ENCODE measurements at regions of chr1 and their contacts with region 1.

Region 1: DNA sequence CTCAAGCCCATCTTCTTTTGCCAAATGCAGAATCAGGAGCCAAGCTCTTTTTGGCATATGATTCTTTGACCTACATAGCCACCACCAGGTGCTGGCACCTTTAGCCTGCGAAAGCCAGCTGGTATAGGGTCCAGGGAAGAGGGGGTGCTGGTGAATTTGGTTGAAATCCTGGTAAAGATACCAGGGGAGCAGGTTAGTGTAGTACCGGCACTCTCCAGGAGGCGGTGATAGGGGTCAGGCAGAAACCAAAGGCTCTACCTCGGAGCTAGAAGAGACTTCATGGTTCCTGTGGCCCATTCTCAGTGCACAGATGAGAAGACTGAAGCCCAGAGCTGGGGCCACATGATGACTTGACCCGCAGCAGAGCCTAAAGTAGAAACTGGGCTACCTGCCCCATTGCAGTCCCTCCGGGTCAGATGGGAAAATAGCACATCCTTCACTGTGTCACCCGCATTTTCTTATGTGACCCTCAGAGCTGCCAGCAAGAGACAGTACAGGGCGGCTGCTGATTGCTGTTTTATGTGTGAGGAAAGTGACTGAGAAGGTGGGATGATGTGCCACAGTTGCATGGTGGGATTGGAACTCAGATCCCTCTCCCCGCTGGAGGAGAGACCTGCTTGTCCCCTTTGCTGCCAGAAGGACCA is 36.0 kb upstream of the IL19 start:
- DNase-seq: peak; percentile 74
- ATAC-seq: peak; percentile 28
- H3K4me3 Mint-ChIP-seq: no peak overlapping the region
- H3K27ac Mint-ChIP-seq: peak overlapping the region; percentile 44
- H3K4me1 Mint-ChIP-seq: peaks cover 70% of the 10 kb centered on the region
- H3K27me3 Mint-ChIP-seq: no peaks in the 10 kb centered on the region

Region 2: DNA sequence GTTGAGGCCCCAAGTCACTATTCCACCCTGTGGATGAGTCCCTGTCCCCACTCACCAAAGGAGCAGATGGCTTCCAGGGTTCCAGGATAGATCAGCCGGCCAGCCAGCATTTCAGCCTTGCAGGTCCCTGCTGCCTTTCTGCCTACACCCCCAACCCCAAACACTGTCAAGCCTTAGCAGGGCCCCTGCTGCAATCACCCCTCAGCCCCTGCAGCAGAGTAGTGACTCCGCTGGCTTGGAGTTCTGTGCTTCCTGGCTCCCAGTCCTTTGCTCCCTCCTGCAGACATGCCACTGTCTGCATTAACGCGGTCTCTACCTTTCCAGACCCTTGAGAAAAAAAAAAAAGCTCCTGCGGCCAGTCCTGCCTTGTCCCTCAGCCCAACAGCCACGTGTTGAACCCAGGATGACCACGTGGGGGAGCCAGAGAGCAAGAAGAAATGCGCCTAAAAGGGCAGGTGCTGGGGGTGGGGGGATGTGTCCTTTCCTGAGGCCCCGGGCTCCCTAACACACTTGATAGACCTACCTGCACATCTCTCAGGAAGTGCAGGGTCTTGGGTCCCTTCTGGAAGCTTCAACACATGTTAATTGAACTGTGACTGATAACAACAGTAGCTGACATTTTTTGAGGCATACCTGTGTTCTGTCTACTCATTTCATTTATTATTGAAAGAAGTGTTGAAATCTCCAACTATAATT is 189.9 kb before region 1 on chr1:
- CTCF ChIA-PET with region 1: no interaction called
- POLR2A ChIA-PET with region 1: no interaction called
- DNase-seq: peak; percentile 85
- ATAC-seq: peak; percentile 81
- H3K4me3 Mint-ChIP-seq: no peak overlapping the region
- H3K27ac Mint-ChIP-seq: peak overlapping the region; percentile 26
- H3K4me1 Mint-ChIP-seq: peaks cover 20% of the 10 kb centered on the region
- H3K27me3 Mint-ChIP-seq: no peaks in the 10 kb centered on the region

Region 3: DNA sequence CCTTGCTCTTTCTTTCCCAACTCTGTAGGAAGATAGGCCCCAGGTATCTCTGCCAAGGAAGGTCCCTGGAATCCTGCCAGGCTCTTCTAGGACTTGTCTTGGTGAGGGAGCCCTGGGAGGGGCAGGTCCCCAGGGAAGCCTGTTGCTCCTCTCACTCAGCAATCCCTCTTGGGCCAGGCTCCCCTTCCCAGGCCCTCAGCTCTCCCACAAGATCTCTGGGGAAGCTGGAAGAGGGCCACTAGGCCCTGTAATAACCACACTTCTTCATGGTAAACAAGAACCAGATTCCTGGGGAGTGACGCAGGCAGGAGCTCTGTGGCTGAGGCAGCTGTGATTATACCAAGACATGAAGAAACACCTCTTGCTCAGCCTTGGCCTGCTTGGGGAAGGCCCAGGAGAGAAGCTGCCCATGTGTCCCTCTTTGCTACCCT is 59.9 kb before region 1 on chr1:
- CTCF ChIA-PET with region 1: no interaction called
- POLR2A ChIA-PET with region 1: no interaction called
- DNase-seq: no peak
- ATAC-seq: no peak
- H3K4me3 Mint-ChIP-seq: no peak overlapping the region
- H3K27ac Mint-ChIP-seq: no peak overlapping the region
- H3K4me1 Mint-ChIP-seq: peaks cover 3% of the 10 kb centered on the region
- H3K27me3 Mint-ChIP-seq: peaks cover 4% of the 10 kb centered on the region

Region 4: DNA sequence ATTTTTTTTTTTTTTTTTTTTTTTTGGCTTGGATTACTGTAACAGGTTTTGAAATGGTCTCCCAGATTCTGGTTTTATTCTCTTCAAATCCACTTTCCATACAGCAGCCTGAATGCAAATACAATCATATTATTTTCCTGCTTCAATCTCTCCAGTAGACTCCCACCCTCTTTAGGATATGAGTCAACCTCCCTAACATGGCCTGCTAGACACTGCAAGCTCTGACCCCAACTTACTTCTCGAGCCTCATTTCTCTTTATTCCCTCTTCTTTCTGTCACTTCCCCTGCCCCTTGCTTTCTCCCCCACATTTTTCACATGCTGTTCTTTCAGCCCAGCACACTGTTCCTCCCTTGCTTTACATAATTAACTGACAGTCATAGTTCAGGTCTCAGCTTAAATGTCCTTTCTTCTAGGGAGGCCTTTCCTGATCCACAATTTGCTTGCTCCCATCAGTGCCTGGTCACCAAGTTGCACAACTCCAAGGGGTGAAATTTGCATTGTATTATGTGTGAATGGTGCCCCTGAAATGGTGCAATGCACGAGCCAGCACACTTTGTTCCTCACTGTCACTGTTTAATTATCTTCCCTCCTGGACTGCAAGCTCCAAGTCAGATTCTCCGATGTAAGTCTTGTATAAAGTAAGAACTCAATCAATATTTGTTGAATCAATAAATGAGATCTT is 13.9 kb after region 1 on chr1:
- CTCF ChIA-PET with region 1: interaction called, 13 read pairs
- POLR2A ChIA-PET with region 1: interaction called, 3 read pairs
- DNase-seq: no peak
- ATAC-seq: no peak
- H3K4me3 Mint-ChIP-seq: no peak overlapping the region
- H3K27ac Mint-ChIP-seq: no peak overlapping the region
- H3K4me1 Mint-ChIP-seq: peaks cover 20% of the 10 kb centered on the region
- H3K27me3 Mint-ChIP-seq: peaks cover 24% of the 10 kb centered on the region

Region 5: DNA sequence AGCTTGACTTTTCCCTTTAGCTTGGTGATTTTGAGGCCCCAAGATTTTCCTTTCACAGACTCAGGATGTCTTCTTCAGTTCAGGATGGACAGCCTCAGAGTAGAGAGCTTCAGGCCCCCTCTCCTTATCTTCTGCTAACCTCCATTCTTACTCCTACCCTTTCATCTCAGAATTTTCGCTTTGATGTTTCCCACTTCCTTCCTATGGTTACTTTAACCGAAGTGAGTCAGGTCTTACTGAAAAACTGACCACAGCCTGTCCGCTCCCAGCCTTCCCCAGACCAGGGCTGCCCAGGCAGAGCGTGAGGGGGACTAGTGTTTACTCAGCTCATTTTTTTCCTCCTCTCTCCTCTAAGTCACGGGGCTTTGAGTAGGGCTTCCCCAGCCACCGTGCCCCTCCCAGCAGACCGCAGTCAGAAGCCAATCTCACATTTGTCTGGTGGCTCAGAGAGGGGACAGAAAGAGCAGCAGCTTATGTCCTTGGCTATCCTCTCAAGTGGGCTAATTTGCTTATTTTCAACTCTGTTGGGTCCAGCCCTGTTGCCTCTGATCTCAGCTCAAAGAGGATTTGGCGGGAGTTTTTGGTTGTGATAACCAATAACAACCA is 31.7 kb after region 1 on chr1:
- CTCF ChIA-PET with region 1: interaction called, 118 read pairs
- POLR2A ChIA-PET with region 1: interaction called, 4 read pairs
- DNase-seq: peak; percentile 85
- ATAC-seq: peak; percentile 80
- H3K4me3 Mint-ChIP-seq: peak overlapping the region; percentile 61
- H3K27ac Mint-ChIP-seq: peak overlapping the region; percentile 68
- H3K4me1 Mint-ChIP-seq: peaks cover 70% of the 10 kb centered on the region
- H3K27me3 Mint-ChIP-seq: peaks cover 19% of the 10 kb centered on the region

Region 6: DNA sequence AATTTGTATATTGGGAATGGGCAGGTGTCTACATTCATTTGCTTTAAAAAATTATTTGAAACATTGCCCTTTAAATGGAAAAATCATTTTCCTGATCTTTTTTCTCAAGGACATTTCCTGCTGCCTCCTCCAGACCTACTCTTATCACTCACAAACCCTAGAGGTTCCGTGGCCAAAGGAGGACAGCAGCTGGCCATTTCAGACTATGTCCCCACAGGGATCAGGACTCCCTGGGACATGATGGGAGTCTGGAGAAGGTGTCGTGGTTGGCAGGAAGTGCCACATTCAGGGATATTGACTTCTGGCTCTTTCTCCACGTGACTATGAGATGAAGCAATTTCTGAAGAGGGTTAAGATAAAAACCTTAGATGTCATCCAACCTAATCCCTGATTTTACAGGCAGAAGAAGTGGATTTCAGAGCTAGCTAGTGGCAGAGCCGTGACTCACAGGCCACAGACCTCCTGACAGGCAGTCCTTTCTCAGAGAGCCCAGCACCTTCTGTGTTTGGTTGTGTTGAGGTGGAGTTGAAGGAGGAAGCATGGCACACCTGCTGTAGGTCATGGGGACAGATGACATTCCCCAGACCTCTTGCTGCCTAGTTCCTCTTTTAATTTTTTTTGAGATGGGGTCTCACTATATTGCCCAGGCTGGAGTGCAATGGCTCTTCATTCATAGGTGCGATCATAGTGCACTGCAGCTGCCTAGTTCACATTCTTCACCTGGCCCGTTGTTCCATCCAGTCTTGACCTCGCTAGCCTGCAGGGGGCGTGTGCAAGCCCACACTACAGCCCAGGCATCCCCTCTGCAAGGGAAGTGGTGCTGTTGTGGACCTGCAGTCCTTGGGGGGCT is 63.1 kb after region 1 on chr1:
- CTCF ChIA-PET with region 1: interaction called, 724 read pairs
- POLR2A ChIA-PET with region 1: interaction called, 11 read pairs
- DNase-seq: peak; percentile 45
- ATAC-seq: no peak
- H3K4me3 Mint-ChIP-seq: no peak overlapping the region
- H3K27ac Mint-ChIP-seq: no peak overlapping the region
- H3K4me1 Mint-ChIP-seq: peaks cover 51% of the 10 kb centered on the region
- H3K27me3 Mint-ChIP-seq: peaks cover 34% of the 10 kb centered on the region

Region 7: DNA sequence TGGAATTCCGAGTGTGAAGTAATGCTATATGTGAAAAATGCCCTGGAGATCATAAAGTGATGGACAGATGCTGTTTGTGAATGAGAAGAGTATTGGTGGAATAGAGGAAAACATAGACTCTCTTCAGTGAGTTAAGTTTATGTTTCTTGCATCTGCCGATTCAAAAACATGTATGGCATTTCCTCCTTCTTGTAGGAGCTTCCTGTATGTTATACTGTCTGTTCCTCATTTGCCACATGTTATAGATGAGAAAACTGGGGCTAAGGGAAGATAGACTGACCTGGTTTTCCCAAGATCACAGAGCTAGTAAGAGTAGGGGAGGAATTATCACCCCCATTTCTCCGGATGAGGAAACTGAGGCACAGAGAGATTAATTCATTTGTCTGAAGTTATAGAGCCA is 89.7 kb after region 1 on chr1:
- CTCF ChIA-PET with region 1: interaction called, 10 read pairs
- POLR2A ChIA-PET with region 1: no interaction called
- DNase-seq: no peak
- ATAC-seq: no peak
- H3K4me3 Mint-ChIP-seq: no peak overlapping the region
- H3K27ac Mint-ChIP-seq: no peak overlapping the region
- H3K4me1 Mint-ChIP-seq: peaks cover 40% of the 10 kb centered on the region
- H3K27me3 Mint-ChIP-seq: no peaks in the 10 kb centered on the region

Region 8: GRCh38 chr1:206856674-206857464 is 122.2 kb after region 1 on chr1:
- CTCF ChIA-PET with region 1: interaction called, 10 read pairs
- POLR2A ChIA-PET with region 1: no interaction called
- DNase-seq: no peak
- ATAC-seq: peak; percentile 53
- H3K4me3 Mint-ChIP-seq: no peak overlapping the region
- H3K27ac Mint-ChIP-seq: no peak overlapping the region
- H3K4me1 Mint-ChIP-seq: peaks cover 15% of the 10 kb centered on the region
- H3K27me3 Mint-ChIP-seq: peaks cover 25% of the 10 kb centered on the region

Region 9: DNA sequence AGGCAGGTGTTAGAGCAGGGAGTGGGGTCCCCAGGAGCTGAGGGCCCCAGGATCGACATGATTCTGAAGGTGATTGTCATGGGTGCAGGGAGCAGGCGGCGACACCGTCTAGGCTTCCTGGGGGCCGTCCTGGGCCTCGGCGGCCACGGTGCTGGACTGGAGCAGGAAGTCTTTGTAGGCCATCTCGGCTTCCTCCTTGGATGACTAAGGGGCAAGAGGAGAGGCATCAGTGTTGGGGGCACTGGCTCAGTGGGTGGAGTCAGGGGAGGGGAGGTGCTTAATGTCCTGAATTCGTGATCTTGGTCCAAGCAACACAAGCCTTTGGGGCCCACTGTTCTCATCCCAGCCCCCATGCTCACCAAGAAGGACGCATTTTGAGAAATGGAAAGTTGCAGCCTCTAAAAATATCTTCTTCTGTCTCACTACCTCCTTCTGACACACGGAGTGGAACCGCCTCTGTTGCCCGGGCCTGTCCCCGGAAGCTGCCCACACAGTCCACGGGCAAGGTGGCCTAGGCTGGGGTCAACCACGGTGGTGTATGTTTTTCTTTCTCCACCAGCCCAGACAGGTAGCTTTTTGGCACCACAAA is 195.7 kb after region 1 on chr1:
- CTCF ChIA-PET with region 1: interaction called, 10 read pairs
- POLR2A ChIA-PET with region 1: no interaction called
- DNase-seq: peak; percentile 41
- ATAC-seq: peak; percentile 37
- H3K4me3 Mint-ChIP-seq: peak overlapping the region; percentile 40
- H3K27ac Mint-ChIP-seq: peak overlapping the region; percentile 85
- H3K4me1 Mint-ChIP-seq: peaks cover 50% of the 10 kb centered on the region
- H3K27me3 Mint-ChIP-seq: no peaks in the 10 kb centered on the region